Pancreas (tissue), 10 donors: ENCODE measurements at regions of chr3 and their contacts with region 1.

Region 1: GRCh38 chr3:128693696-128694095 is 32.3 kb upstream of the RAB7A start:
- DNase-seq: no peak
- ATAC-seq: no peak
- H3K4me3 ChIP-seq: no peak overlapping the region
- H3K27ac ChIP-seq: no peak overlapping the region
- H3K4me1 ChIP-seq: no peaks in the 10 kb centered on the region
- H3K27me3 ChIP-seq: no peaks in the 10 kb centered on the region
- CTCF ChIP-seq: no peak

Region 2: DNA sequence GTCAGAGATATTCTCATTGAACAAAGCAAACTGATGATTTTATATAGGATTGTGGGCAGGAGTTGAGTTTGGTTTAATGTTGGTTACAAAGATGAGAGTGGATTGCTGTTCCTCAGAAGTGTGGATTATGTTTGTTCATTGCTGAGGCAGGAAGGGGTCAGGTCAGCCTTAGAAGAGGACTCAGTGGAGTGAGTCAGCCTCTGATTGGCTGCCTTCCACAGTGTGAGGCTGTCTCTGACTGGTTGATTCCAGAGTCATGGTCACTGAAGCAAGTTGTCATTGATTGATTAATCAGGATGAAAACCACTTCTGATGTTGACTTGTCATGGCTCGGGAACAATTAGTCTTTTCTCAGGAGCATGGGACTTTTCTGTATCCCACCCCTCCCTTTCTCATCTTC is 742.4 kb before region 1 on chr3:
- intact Hi-C with region 1: no loop called
- DNase-seq: no peak
- ATAC-seq: no peak
- H3K4me3 ChIP-seq: no peak overlapping the region
- H3K27ac ChIP-seq: no peak overlapping the region
- H3K4me1 ChIP-seq: no peaks in the 10 kb centered on the region
- H3K27me3 ChIP-seq: no peaks in the 10 kb centered on the region
- CTCF ChIP-seq: no peak

Region 3: DNA sequence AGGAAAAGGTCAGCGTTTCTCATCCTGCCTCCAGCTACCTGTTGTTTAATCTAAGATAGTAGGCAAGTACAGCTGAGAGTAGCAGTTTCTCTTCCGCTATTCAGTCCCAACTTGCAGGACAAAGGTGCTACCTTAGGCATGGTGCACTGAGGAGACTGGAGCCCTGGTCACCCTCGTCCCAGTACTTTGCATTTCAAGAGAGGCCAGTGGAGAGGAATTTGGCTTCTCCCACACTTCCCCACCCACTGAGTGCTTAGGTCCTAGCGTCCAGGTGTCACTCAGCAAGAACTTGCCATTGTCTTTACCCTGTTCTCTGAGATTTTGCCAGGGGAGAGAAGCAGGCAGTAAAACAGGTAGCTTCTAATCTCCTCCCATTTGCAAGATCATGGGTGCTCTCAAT is 30.5 kb before region 1 on chr3:
- intact Hi-C with region 1: loop called in 1 of 3 experiments (anchors 2 kb)
- DNase-seq: no peak
- ATAC-seq: no peak
- H3K4me3 ChIP-seq: no peak overlapping the region
- H3K27ac ChIP-seq: no peak overlapping the region
- H3K4me1 ChIP-seq: no peaks in the 10 kb centered on the region
- H3K27me3 ChIP-seq: no peaks in the 10 kb centered on the region
- CTCF ChIP-seq: no peak